Posterior vena cava (tissue), 2 donors: ENCODE measurements at regions of chr12 and their contacts with region 1.

Region 1: DNA sequence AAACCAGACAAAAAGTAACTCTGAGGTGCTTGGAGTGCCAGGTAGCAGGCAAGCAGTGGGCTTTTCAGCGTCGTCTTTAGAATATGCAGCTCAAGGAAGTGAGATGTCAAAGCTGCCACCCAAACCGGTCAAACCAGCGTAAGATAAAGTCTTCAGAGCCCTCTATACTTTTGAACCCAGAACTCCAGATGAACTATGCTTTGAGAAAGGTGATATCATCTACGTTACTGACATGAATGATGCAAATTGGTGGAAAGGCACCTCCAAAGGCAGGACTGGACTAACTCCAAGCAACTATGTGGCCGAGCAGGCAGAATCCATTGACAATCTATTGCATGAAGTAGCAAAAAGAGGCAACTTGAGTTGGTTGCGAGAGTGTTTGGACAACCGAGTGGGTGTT is 95.9 kb downstream of the TBX3 start:
- DNase-seq: no peak

Region 2: GRCh38 chr12:114508529-114509129 is 79.5 kb before region 1 on chr12:
- intact Hi-C with region 1: no loop called
- DNase-seq: no peak

Region 3: GRCh38 chr12:114598111-114598510 is 10.0 kb after region 1 on chr12:
- intact Hi-C with region 1: loop called in 1 of 2 experiments (anchors 1 kb)
- DNase-seq: no peak

Region 4: DNA sequence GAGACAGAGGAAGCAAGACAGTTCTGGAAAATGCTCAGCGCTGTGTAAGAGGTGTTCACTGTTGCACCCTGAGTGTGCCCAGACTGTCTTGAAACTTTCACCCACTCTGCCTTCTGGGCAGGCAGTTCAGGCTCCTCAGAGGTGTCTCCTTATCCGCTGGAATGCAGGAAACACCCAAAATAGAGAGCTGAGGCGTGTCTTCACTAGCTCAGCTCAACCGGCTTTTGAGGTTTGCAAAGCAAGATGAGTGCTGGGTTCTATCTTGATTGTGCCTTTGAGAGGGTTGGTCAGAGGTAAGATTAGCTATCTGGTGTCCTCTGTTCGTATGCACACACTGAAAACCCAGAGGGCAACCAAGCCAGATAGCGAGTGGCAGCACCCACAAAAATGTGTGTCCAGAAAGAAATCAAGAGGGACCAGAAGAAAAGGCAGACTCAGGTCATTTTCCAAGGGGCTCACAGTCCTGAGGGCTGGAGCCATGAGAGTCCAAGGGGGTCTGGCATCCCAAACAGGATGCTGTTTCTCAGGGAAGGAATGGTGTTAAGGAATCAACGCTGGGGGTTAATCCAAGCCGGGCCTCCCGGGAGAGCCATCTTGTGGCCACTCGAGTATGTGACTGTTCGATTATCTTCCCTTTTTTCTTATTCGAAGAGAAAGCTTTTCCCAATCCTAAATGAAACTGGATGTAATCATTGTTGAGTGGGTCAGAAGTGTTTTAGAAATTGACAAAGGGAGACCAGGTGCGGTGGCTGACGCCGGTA is 48.8 kb after region 1 on chr12:
- intact Hi-C with region 1: no loop called
- DNase-seq: no peak

Region 5: DNA sequence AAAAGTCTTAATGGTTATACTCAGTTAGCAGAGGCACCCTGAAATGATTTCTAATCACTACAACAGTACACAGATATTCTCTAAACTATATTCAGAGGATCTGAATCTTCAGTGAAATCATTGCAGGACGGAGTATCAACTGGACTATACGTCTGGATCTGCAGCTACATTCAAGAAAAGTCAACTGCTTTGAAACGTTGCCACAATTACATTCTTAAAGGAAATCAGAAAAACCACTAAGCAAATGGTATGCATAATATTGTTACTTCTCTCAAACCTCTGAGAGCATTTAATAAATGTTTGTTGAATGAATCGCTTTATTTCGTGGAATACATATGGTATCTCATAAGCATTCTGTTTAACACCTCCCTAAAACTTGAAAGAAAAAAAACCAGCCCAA is 1622.0 kb after region 1 on chr12:
- intact Hi-C with region 1: no loop called
- DNase-seq: no peak